ENCODE measurements at regions of chr9 and their contacts with region 1.

Region 1: GRCh38 chr9:133238851-133239532 is 29.9 kb upstream of the OBP2B start:
- DNase-seq: peak; percentile 93
- ATAC-seq: peak; percentile 69
- H3K4me3 Mint-ChIP-seq: peak overlapping the region; percentile 71
- H3K27ac Mint-ChIP-seq: peak overlapping the region; percentile 93
- H3K4me1 Mint-ChIP-seq: peaks cover 4% of the 10 kb centered on the region
- H3K27me3 Mint-ChIP-seq: peaks cover 36% of the 10 kb centered on the region
- CTCF ChIP-seq: peak; percentile 93

Region 2: DNA sequence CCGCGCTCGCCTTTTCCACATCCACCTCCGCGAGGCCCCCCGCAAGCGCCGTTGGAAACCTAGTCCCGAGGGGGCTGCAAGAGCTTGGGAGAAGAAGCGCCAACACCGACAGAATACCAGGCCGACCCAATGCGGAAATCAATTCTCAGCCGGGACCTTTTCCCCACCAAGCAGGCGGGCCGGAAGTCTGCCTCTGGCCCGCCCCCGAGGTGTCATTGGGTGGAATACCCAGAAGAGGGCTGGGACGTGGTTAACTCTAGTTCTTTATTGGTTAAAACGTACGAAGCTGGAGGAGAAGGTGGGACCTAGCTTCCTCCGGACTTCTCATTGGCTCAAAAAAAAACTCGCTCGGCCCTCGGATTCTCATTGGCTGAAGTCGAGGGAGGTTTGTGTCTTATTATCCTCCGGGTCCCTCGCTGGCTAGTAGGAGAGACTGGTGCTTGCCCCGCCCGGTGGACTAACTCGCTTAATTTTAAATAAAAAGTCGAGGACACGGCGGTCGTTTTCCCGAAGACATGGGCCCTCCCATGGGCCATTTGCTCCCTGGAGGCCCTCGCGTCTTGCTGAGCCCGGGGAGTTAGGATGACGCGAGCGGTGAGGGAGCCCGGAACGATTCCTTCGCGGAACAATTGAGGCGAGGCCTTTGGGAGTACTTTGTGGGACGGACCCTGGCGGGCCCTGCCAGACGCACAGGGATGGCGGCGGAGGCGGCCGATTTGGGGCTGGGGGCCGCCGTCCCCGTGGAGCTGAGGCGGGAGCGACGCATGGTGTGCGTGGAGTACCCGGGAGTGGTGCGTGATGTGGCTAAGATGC is 208.5 kb before region 1 on chr9 and contains the start of gene GTF3C5:
- CTCF ChIA-PET with region 1: interaction called, 10 read pairs
- POLR2A ChIA-PET with region 1: no interaction called
- DNase-seq: peak; percentile 90
- ATAC-seq: peak; percentile 98
- H3K4me3 Mint-ChIP-seq: peak within 1 kb of the TSS; percentile 99
- H3K27ac Mint-ChIP-seq: peak within 1 kb of the TSS; percentile 99
- H3K4me1 Mint-ChIP-seq: peaks cover 17% of the 10 kb centered on the region
- H3K27me3 Mint-ChIP-seq: peaks cover 12% of the 10 kb centered on the region
- CTCF ChIP-seq: no peak
- total RNA-seq, gene GTF3C5: 86.6 to 104 TPM (median 87.6 TPM) in 3 replicates

Region 3: GRCh38 chr9:133225171-133226011 is 13.6 kb before region 1 on chr9:
- CTCF ChIA-PET with region 1: interaction called, 16 read pairs
- POLR2A ChIA-PET with region 1: no interaction called
- DNase-seq: no peak
- ATAC-seq: no peak
- H3K4me3 Mint-ChIP-seq: no peak overlapping the region
- H3K27ac Mint-ChIP-seq: no peak overlapping the region
- H3K4me1 Mint-ChIP-seq: peaks cover 6% of the 10 kb centered on the region; the same call in 1 of the 2 replicates
- H3K27me3 Mint-ChIP-seq: peaks cover 27% of the 10 kb centered on the region
- CTCF ChIP-seq: no peak

Region 4: GRCh38 chr9:133252301-133252780 is 13.3 kb after region 1 on chr9:
- CTCF ChIA-PET with region 1: interaction called, 23 read pairs
- POLR2A ChIA-PET with region 1: no interaction called
- DNase-seq: no peak
- ATAC-seq: no peak
- H3K4me3 Mint-ChIP-seq: no peak overlapping the region
- H3K27ac Mint-ChIP-seq: no peak overlapping the region
- H3K4me1 Mint-ChIP-seq: peaks cover 7% of the 10 kb centered on the region
- H3K27me3 Mint-ChIP-seq: peaks cover 3% of the 10 kb centered on the region; the same call in 1 of the 2 replicates
- CTCF ChIP-seq: no peak

Region 5: DNA sequence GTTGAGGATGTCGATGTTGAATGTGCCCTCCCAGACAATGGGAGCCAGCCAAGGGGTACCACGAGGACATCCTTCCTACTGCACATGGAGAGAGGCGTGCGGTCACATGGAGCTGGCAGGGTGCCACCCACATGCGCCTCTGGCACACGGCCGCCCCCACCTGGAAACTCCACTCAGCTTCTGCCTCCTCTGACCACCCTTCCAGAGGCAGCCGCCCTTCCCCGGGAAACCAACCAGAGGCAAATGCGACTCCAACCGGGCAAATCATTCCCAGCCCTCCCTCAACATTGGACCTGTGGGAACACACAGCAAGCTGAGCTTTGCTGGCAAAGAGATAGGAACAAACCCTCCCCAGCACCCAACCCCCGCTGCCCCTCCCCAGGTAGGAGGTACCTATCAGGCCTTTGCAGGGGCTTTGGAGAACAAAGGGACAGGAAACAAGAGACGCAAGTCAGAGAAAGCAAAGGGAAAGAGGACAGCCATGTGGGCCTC is 18.5 kb after region 1 on chr9:
- CTCF ChIA-PET with region 1: interaction called, 23 read pairs
- POLR2A ChIA-PET with region 1: no interaction called
- DNase-seq: no peak
- ATAC-seq: peak; percentile 57
- H3K4me3 Mint-ChIP-seq: no peak overlapping the region
- H3K27ac Mint-ChIP-seq: no peak overlapping the region
- H3K4me1 Mint-ChIP-seq: peaks cover 11% of the 10 kb centered on the region
- H3K27me3 Mint-ChIP-seq: peaks cover 10% of the 10 kb centered on the region; the same call in 1 of the 2 replicates
- CTCF ChIP-seq: no peak

Region 6: GRCh38 chr9:133275105-133276000 is 36.4 kb after region 1 on chr9 and contains the start of gene ABO:
- CTCF ChIA-PET with region 1: interaction called, 18 read pairs
- POLR2A ChIA-PET with region 1: no interaction called
- DNase-seq: peak; percentile 47
- ATAC-seq: peak; percentile 75
- H3K4me3 Mint-ChIP-seq: peak within 1 kb of the TSS; percentile 72
- H3K27ac Mint-ChIP-seq: no peak within 1 kb of the TSS
- H3K4me1 Mint-ChIP-seq: no peaks in the 10 kb centered on the region
- H3K27me3 Mint-ChIP-seq: peaks cover 81% of the 10 kb centered on the region
- CTCF ChIP-seq: 0 out of 2 replicates have a peak, but pooled peaks have one; percentile 12
- total RNA-seq, gene ABO: 0.15 to 0.39 TPM (median 0.25 TPM) in 3 replicates

Region 7: DNA sequence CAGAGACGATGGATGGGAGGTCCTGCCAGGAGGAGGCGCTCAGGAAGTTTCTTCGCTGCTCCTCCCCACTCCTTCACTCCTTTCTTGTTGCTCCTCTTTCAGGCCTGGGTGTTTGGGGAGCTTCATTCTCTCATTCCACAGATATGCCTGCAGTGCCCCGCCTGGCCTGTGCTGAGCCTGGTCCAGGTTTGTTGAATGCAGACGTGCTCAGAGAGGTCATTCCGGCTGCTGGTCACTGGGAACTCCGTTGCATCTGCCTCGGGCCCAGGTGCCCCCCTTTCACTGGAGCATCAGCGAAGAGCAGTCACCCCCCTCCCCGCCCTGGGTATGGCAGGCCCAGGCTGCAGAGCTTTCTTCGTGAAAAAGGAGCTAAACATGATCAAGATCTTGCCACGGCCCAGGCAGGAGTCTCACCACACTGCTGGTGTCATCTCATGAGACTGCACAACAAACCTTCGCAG is 81.5 kb after region 1 on chr9:
- CTCF ChIA-PET with region 1: interaction called, 13 read pairs
- POLR2A ChIA-PET with region 1: no interaction called
- DNase-seq: peak; percentile 35
- ATAC-seq: peak; percentile 93
- H3K4me3 Mint-ChIP-seq: no peak overlapping the region
- H3K27ac Mint-ChIP-seq: no peak overlapping the region
- H3K4me1 Mint-ChIP-seq: no peaks in the 10 kb centered on the region
- H3K27me3 Mint-ChIP-seq: peaks cover 18% of the 10 kb centered on the region
- CTCF ChIP-seq: no peak

Measured in WTC11 (cell line).